ENCODE measurements at regions of chr6 and their contacts with region 1.

Region 1: GRCh38 chr6:150575836-150576235 is 23.8 kb upstream of the PLEKHG1 start:
- DNase-seq: no peak
- ATAC-seq: no peak
- H3K4me3 ChIP-seq: no peak overlapping the region
- H3K4me3 Mint-ChIP-seq: no peak overlapping the region
- H3K27ac ChIP-seq: no peak overlapping the region
- H3K27ac Mint-ChIP-seq: no peak overlapping the region
- H3K4me1 ChIP-seq: peaks cover 27 to 31% of the 10 kb centered on the region in 2 donors
- H3K4me1 Mint-ChIP-seq: peaks cover 21% of the 10 kb centered on the region
- H3K27me3 ChIP-seq: peaks cover 0 to 50% (median 27%) of the 10 kb centered on the region in 4 experiments
- H3K27me3 Mint-ChIP-seq: peaks cover 42% of the 10 kb centered on the region
- CTCF ChIP-seq: no peak

Region 2: GRCh38 chr6:150590448-150590847 is 14.6 kb after region 1 on chr6:
- CTCF ChIA-PET with region 1: no interaction called
- POLR2A ChIA-PET with region 1: no interaction called
- intact Hi-C with region 1: loop called (anchors 2 kb)
- DNase-seq: peak; percentile 51
- ATAC-seq: peak; percentile 67
- H3K4me3 ChIP-seq: no peak overlapping the region
- H3K4me3 Mint-ChIP-seq: peak overlapping the region; percentile 55
- H3K27ac ChIP-seq: no peak overlapping the region
- H3K27ac Mint-ChIP-seq: no peak overlapping the region
- H3K4me1 ChIP-seq: peaks cover 8 to 14% of the 10 kb centered on the region in 2 donors
- H3K4me1 Mint-ChIP-seq: peaks cover 11% of the 10 kb centered on the region
- H3K27me3 ChIP-seq: peaks cover 0 to 3% (median 1%) of the 10 kb centered on the region in 4 experiments
- H3K27me3 Mint-ChIP-seq: no peaks in the 10 kb centered on the region
- CTCF ChIP-seq: no peak

Region 3: GRCh38 chr6:150732765-150733539 is 157.1 kb after region 1 on chr6:
- CTCF ChIA-PET with region 1: no interaction called
- POLR2A ChIA-PET with region 1: no interaction called
- intact Hi-C with region 1: no loop called
- DNase-seq: peak; percentile 19
- ATAC-seq: peak; percentile 60
- H3K4me3 ChIP-seq: no peak overlapping the region
- H3K4me3 Mint-ChIP-seq: peak overlapping the region; percentile 30
- H3K27ac ChIP-seq: peak overlapping the region in 1 of 2 donors; percentile 20
- H3K27ac Mint-ChIP-seq: peak overlapping the region; percentile 73
- H3K4me1 ChIP-seq: peaks cover 8 to 14% of the 10 kb centered on the region in 2 donors
- H3K4me1 Mint-ChIP-seq: peaks cover 53% of the 10 kb centered on the region
- H3K27me3 ChIP-seq: no peaks in the 10 kb centered on the region
- H3K27me3 Mint-ChIP-seq: no peaks in the 10 kb centered on the region
- CTCF ChIP-seq: no peak

Region 4: DNA sequence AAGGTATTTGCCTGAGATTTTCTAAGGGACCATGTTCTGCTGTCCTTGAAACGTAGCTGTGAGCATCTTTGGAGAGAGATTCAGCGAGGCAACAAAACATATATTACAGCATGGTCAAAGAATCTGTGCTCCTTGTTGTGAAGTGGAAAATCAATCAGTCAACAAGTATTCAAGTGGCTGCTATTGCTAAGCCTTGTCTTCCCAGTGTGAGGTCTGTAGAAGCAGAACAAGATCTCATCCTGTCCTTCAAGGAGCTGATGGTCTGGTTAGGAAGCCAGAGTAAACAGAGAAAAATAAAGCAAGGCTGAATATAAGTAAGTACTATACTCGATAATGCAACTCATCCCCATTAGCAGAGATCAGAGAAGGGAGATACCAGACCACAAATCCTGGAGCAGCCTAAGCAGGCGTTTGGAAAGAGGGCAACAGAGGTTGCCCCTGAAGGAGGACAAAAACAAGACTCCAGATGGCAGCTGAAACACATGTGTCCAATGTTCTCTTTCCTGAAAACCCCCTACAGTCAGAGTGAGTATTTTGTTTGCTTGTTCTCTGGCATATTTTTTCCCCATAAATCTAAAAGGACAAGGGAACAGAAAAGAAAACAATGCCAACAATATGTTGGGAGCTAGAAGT is 1669.3 kb after region 1 on chr6:
- CTCF ChIA-PET with region 1: no interaction called
- POLR2A ChIA-PET with region 1: no interaction called
- intact Hi-C with region 1: no loop called
- DNase-seq: no peak
- ATAC-seq: no peak
- H3K4me3 ChIP-seq: no peak overlapping the region
- H3K4me3 Mint-ChIP-seq: no peak overlapping the region
- H3K27ac ChIP-seq: no peak overlapping the region
- H3K27ac Mint-ChIP-seq: no peak overlapping the region
- H3K4me1 ChIP-seq: no peaks in the 10 kb centered on the region
- H3K4me1 Mint-ChIP-seq: no peaks in the 10 kb centered on the region
- H3K27me3 ChIP-seq: no peaks in the 10 kb centered on the region
- H3K27me3 Mint-ChIP-seq: no peaks in the 10 kb centered on the region
- CTCF ChIP-seq: no peak